Right ventricle myocardium inferior (tissue), 1 donor: ENCODE measurements at regions of chr11 and their contacts with region 1.

Region 1: GRCh38 chr11:69443138-69443967 is 38.1 kb upstream of the LINC01488 start:
- DNase-seq: peak; percentile 95
- ATAC-seq: peak; percentile 94

Region 2: GRCh38 chr11:69296890-69297786 is 146.2 kb before region 1 on chr11:
- intact Hi-C with region 1: loop called (anchors 5 kb)
- DNase-seq: peak; percentile 97
- ATAC-seq: peak; percentile 76

Region 3: DNA sequence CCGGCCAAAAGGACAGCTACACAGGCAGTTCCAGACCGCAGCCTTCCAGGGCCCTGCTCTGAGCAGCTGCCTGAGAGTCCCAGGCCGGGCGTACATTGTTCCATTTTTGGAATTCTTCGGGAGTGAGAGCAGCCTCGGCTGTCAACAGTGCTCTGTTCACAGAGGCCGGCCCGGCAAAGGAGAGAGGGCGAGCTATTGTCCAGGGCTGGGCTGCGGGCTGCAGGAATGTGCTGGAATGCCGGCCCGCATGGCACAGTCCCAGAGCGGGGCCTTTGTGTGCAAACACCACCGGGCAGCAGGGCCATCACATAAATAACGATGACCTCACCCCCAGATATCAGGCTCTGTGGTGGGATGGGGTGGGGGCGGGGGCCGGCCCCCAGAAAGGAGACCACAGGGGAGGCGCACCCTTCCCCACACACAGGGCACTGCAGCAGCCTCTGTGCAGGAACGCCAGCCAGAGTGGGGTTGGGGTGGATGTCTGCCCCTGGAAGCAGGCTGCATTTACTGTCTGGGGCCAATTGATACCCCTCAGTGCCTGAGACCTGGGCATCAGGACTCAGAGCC is 54.0 kb after region 1 on chr11:
- intact Hi-C with region 1: loop called (anchors 5 kb)
- DNase-seq: peak; percentile 90
- ATAC-seq: peak; percentile 96